Activated B cell treated with CpG ODN at 0.5 μM for 24 hours (primary cell): ENCODE measurements at regions of chr2 and their contacts with region 1.

Region 1: GRCh38 chr2:222561817-222562645 is 93.9 kb downstream of the FARSB start:
- DNase-seq: no peak
- ATAC-seq: peak; percentile 54
- H3K4me3 Mint-ChIP-seq: no peak overlapping the region
- H3K27ac Mint-ChIP-seq: no peak overlapping the region
- H3K4me1 Mint-ChIP-seq: no peaks in the 10 kb centered on the region
- H3K27me3 Mint-ChIP-seq: no peaks in the 10 kb centered on the region
- CTCF ChIP-seq: no peak

Region 2: GRCh38 chr2:222057347-222058073 is 504.5 kb before region 1 on chr2:
- CTCF ChIA-PET with region 1: interaction called, 4 read pairs
- POLR2A ChIA-PET with region 1: no interaction called
- intact Hi-C with region 1: loop called (anchors 2 kb)
- DNase-seq: no peak
- ATAC-seq: no peak
- H3K4me3 Mint-ChIP-seq: no peak overlapping the region
- H3K27ac Mint-ChIP-seq: no peak overlapping the region
- H3K4me1 Mint-ChIP-seq: no peaks in the 10 kb centered on the region
- H3K27me3 Mint-ChIP-seq: peaks cover 14% of the 10 kb centered on the region
- CTCF ChIP-seq: no peak

Region 3: DNA sequence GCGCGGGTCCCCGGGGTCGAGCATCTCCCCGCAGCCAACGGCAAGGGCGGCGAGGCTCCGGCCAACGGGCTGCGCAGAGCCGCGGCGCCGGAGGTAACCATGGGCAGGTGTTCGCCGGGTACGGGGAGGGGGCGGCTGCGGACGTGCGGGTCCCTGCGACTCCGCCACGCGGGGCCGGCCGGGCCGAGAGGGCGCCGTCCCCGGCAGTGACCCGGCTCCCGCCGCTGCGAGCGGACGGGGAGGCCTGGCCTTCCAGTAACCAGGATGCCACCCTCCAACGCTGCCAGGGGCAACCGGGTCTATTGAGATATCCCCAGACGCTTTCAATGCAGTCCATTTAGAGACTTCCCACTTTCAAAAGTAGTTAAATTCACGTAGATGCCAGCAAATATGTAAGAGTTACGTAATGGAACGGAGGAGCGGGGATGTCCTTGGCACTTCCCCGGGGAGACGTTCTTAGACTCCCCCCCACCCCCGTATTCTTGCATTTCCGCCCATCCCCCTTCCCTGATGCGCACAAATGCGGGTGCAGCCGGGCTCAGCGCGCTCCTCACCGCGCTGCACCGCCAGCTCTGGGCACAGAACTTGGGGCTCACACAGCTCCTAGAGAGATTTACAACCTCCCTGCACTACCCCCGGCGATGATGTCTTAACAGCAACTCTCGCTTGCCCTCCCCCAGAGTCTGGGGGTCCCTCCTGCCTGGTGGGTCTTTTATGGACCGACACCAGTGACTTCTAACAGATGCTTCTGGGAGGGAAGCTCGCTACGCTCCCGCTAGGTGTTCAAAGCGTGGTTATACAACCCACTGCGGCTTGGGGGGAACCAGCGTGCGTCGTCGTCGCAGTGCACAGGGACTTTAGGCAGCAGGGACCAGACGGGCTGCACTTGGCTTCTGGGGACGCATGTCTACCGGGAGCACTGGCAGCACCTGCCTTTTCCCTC is 137.0 kb before region 1 on chr2:
- CTCF ChIA-PET with region 1: interaction called, 3 read pairs
- POLR2A ChIA-PET with region 1: no interaction called
- intact Hi-C with region 1: loop called (anchors 5 kb)
- DNase-seq: peak; percentile 32
- ATAC-seq: peak; percentile 42
- H3K4me3 Mint-ChIP-seq: peak overlapping the region; percentile 90
- H3K27ac Mint-ChIP-seq: peak overlapping the region; percentile 81
- H3K4me1 Mint-ChIP-seq: peaks cover 47% of the 10 kb centered on the region
- H3K27me3 Mint-ChIP-seq: peaks cover 23% of the 10 kb centered on the region
- CTCF ChIP-seq: no peak

Region 4: GRCh38 chr2:222613715-222614331 is 51.8 kb after region 1 on chr2:
- CTCF ChIA-PET with region 1: no interaction called
- POLR2A ChIA-PET with region 1: no interaction called
- intact Hi-C with region 1: loop called (anchors 1 kb)
- DNase-seq: no peak
- ATAC-seq: peak; percentile 82
- H3K4me3 Mint-ChIP-seq: no peak overlapping the region
- H3K27ac Mint-ChIP-seq: no peak overlapping the region
- H3K4me1 Mint-ChIP-seq: no peaks in the 10 kb centered on the region
- H3K27me3 Mint-ChIP-seq: no peaks in the 10 kb centered on the region
- CTCF ChIP-seq: peak; percentile 22